ENCODE measurements at regions of chrX and their contacts with region 1.

Region 1: GRCh38 chrX:131841496-131842410 is 181.3 kb upstream of the STK26 start:
- DNase-seq: peak in 20 of 35 experiments; percentile 3 to 70 (median 22)
- ATAC-seq: peak in 3 of 4 experiments; percentile 72 to 75 (median 75)
- H3K4me3 ChIP-seq: peak overlapping the region in 1 of 2 donors; percentile 10
- H3K4me3 Mint-ChIP-seq: no peak overlapping the region
- H3K27ac ChIP-seq: no peak overlapping the region
- H3K27ac Mint-ChIP-seq: no peak overlapping the region
- H3K4me1 ChIP-seq: peaks cover 0 to 8% of the 10 kb centered on the region in 2 experiments
- H3K4me1 Mint-ChIP-seq: peaks cover 5 to 9% (median 5%) of the 10 kb centered on the region in 3 donors
- H3K27me3 ChIP-seq: peaks cover 0 to 4% of the 10 kb centered on the region in 2 experiments
- H3K27me3 Mint-ChIP-seq: peaks cover 0 to 23% of the 10 kb centered on the region in 2 donors

Region 2: DNA sequence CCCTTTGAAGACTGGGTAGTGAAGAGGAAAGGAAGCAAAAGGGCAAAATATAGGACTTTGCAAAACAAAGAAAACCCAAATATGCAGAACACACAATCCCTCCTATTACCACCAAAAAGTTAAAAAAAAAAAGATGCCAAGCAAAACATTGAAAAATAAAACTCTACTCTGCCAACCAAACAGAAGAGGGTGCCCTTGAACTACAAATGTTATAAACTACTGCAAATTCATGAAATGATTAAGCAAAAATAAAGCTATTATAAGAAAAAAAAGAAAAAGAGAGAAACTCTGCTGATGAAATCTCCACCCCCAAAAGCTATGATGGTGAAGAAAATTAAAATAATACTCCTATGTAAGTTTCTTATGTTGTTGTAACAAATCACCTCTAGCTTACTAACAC is 12.8 kb after region 1 on chrX:
- CTCF ChIA-PET with region 1: interaction called in 1 of 2 experiments, 16 read pairs
- POLR2A ChIA-PET with region 1: no interaction called
- DNase-seq: peak in 1 of 35 experiments; percentile 46
- ATAC-seq: no peak
- H3K4me3 ChIP-seq: no peak overlapping the region
- H3K4me3 Mint-ChIP-seq: no peak overlapping the region
- H3K27ac ChIP-seq: no peak overlapping the region
- H3K27ac Mint-ChIP-seq: no peak overlapping the region
- H3K4me1 ChIP-seq: no peaks in the 10 kb centered on the region
- H3K4me1 Mint-ChIP-seq: no peaks in the 10 kb centered on the region
- H3K27me3 ChIP-seq: no peaks in the 10 kb centered on the region
- H3K27me3 Mint-ChIP-seq: peaks cover 0 to 25% of the 10 kb centered on the region in 2 donors

Region 3: DNA sequence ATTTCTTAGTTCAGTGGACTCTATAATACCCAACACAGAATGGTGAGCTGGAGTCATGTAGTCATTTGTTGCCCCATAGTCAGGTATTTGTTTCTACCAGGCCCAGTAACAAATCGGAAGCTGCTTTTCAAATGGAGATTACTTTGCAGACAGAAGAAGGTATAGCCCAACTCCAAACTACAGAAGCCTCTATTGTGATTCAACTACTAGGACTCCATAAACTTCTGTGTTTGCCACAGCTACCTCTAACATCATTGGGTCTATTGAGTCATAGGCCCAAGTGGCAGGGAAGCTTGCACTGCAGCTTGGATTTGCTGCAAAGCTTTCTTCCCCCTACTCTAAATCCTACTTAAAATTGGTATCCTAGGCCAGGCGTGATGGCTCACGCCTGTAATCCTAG is 32.5 kb after region 1 on chrX:
- CTCF ChIA-PET with region 1: no interaction called
- POLR2A ChIA-PET with region 1: no interaction called
- DNase-seq: no peak
- ATAC-seq: no peak
- H3K4me3 ChIP-seq: no peak overlapping the region
- H3K4me3 Mint-ChIP-seq: no peak overlapping the region
- H3K27ac ChIP-seq: no peak overlapping the region
- H3K27ac Mint-ChIP-seq: no peak overlapping the region
- H3K4me1 ChIP-seq: no peaks in the 10 kb centered on the region
- H3K4me1 Mint-ChIP-seq: no peaks in the 10 kb centered on the region
- H3K27me3 ChIP-seq: no peaks in the 10 kb centered on the region
- H3K27me3 Mint-ChIP-seq: peaks cover 0 to 20% of the 10 kb centered on the region in 2 donors

Region 4: GRCh38 chrX:133081990-133082389 is 1240.2 kb after region 1 on chrX:
- CTCF ChIA-PET with region 1: interaction called in 1 of 2 experiments, 11 read pairs
- POLR2A ChIA-PET with region 1: no interaction called
- DNase-seq: peak in 1 of 35 experiments; percentile 0
- ATAC-seq: peak in 2 of 4 experiments; percentile 37 to 54
- H3K4me3 ChIP-seq: no peak overlapping the region
- H3K4me3 Mint-ChIP-seq: no peak overlapping the region
- H3K27ac ChIP-seq: no peak overlapping the region
- H3K27ac Mint-ChIP-seq: no peak overlapping the region
- H3K4me1 ChIP-seq: no peaks in the 10 kb centered on the region
- H3K4me1 Mint-ChIP-seq: peaks cover 0 to 7% (median 4%) of the 10 kb centered on the region in 3 donors
- H3K27me3 ChIP-seq: no peaks in the 10 kb centered on the region
- H3K27me3 Mint-ChIP-seq: peaks cover 0 to 15% of the 10 kb centered on the region in 2 donors

Measured in T-cell (primary cell).